ENCODE measurements at regions of chr1 and their contacts with region 1.

Region 1: DNA sequence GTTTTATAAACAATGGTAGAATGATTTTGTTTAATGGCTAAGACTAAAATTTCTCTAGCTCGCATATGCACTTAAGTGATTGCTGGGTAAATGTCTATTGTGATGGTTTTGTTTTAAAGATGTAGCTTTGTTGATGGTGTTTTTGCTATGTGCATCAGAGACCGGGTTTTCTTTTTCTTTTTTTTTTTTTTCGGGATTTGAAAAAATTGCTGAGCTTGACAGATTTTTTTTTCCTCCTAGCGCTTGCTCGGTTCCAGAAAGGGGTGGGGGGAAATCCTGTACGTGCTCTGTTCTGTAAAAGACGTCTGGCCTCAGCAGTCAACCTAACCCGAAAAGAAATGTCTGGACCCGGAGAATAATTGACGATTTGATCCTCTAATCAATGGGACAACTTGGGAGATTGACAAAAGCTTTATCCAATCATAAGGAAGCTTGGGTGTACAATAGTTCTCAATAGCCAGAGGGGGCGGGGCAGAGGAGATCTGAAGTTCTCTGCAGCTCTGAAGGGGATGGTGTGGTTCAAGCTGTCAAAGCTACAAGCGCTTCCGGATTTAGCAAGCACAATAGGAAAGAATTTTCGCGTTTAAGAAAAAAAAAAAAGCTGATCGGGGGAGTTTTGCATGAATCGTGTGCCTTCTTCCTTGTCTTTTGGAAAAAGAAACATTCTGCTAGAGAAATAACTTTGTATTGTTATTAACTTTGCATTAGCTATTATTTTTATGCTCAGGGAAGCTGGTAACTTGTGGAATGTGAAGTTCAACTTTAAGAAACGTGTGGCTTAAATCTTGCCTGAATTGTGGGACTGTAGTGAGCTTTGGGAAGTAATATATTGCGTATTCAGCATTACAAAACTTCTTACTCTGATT is 4.5 kb upstream of the NFIA start:
- DNase-seq: peak; percentile 82
- H3K4me3 Mint-ChIP-seq: peak overlapping the region; percentile 87
- H3K27ac Mint-ChIP-seq: peak overlapping the region; percentile 80
- H3K4me1 Mint-ChIP-seq: peaks cover 38% of the 10 kb centered on the region
- H3K27me3 Mint-ChIP-seq: peaks cover 43% of the 10 kb centered on the region

Region 2: DNA sequence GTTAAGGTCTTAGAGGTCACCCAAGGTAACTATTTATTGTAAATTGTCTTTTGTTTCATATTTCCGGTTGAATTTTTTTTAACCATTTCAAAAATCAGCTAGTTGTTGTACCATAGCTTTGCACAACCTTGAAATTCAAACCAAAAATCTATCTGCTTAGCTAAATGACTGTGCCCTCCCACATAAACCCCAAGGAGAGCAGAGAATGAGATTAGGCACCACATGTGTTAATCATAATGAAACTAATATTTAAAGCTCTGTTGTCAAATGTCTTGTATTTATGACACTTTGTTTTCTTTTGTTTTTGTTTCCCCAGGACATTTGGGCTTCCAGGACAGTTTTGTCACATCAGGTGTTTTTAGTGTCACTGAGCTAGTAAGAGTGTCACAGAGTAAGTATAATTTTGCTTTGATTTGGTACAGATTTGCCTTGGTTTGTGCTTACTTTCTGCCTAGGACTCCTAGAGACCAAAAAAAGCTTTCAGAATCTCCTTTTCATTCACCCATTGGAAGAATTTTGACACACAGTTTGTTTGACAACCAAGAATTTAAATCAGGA is 254.4 kb after region 1 on chr1:
- intact Hi-C with region 1: loop called (anchors 5 kb)
- DNase-seq: no peak
- H3K4me3 Mint-ChIP-seq: no peak overlapping the region
- H3K27ac Mint-ChIP-seq: peak overlapping the region; percentile 29
- H3K4me1 Mint-ChIP-seq: peaks cover 17% of the 10 kb centered on the region
- H3K27me3 Mint-ChIP-seq: peaks cover 38% of the 10 kb centered on the region

Region 3: GRCh38 chr1:61606448-61607312 is 528.8 kb after region 1 on chr1:
- intact Hi-C with region 1: no loop called
- DNase-seq: no peak
- H3K4me3 Mint-ChIP-seq: no peak overlapping the region
- H3K27ac Mint-ChIP-seq: no peak overlapping the region
- H3K4me1 Mint-ChIP-seq: no peaks in the 10 kb centered on the region
- H3K27me3 Mint-ChIP-seq: peaks cover 4% of the 10 kb centered on the region

Measured in activated T-helper 2 cell treated with anti-CD3 and anti-CD28 coated beads, Interferon-gamma antibody, Interleukin-2, Interleukin-4, amounts not matched to agents 10 μg/mL and 5 μg/mL and 100 μg/mL, durations not matched to agents 14 hours and 24 hours and 36 hours (primary cell).